MCF 10A (cell line): ENCODE measurements at regions of chr3 and their contacts with region 1.

Region 1: DNA sequence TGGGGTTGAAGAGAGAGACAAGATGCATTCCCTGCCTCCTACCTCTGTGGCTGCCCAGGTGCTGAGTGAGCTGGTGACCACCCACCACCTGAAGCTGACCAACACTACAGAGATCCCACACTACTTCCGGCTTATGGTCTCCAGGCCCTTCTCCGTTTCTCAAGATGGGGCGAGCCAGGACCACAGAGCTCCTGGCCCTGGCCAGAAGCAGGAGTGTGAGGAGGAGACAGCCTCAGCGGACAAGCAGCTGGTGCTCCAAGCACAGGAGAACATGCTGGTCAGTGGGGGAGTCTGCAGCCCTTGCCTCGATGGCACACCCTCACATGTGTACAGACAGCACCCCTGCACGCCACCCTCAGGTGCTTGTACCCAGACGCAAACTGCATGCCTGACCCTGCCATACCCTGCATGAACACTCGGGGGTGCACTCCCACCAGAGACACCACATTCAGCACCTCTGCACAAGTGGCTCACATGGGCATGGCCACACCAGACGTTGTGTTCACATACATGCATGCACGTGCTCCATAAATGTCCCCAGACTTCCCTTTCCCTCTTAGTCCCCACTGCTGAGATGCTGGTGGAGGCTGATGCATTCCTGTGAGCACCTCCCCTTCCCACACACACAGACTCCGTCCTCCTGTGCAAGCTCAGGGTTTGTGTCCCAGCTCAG is 19.0 kb downstream of the ACAA1 start:
- DNase-seq: peak; percentile 65
- H3K4me3 Mint-ChIP-seq: no peak overlapping the region
- H3K27ac Mint-ChIP-seq: no peak overlapping the region
- H3K4me1 Mint-ChIP-seq: no peaks in the 10 kb centered on the region
- H3K27me3 Mint-ChIP-seq: peaks cover 12% of the 10 kb centered on the region
- CTCF ChIP-seq: peak; percentile 70

Region 2: GRCh38 chr3:37814547-37814946 is 303.3 kb before region 1 on chr3:
- CTCF ChIA-PET with region 1: no interaction called
- POLR2A ChIA-PET with region 1: no interaction called
- intact Hi-C with region 1: no loop called
- DNase-seq: peak; percentile 3
- H3K4me3 Mint-ChIP-seq: no peak overlapping the region
- H3K27ac Mint-ChIP-seq: no peak overlapping the region
- H3K4me1 Mint-ChIP-seq: no peaks in the 10 kb centered on the region
- H3K27me3 Mint-ChIP-seq: no peaks in the 10 kb centered on the region
- CTCF ChIP-seq: peak; percentile 5

Region 3: GRCh38 chr3:38004415-38005076 is 113.3 kb before region 1 on chr3:
- CTCF ChIA-PET with region 1: interaction called, 46 read pairs
- POLR2A ChIA-PET with region 1: interaction called, 3 read pairs
- intact Hi-C with region 1: loop called (anchors 1 kb)
- DNase-seq: peak; percentile 81
- H3K4me3 Mint-ChIP-seq: no peak overlapping the region
- H3K27ac Mint-ChIP-seq: no peak overlapping the region
- H3K4me1 Mint-ChIP-seq: peaks cover 23% of the 10 kb centered on the region
- H3K27me3 Mint-ChIP-seq: no peaks in the 10 kb centered on the region
- CTCF ChIP-seq: peak; percentile 69

Region 4: DNA sequence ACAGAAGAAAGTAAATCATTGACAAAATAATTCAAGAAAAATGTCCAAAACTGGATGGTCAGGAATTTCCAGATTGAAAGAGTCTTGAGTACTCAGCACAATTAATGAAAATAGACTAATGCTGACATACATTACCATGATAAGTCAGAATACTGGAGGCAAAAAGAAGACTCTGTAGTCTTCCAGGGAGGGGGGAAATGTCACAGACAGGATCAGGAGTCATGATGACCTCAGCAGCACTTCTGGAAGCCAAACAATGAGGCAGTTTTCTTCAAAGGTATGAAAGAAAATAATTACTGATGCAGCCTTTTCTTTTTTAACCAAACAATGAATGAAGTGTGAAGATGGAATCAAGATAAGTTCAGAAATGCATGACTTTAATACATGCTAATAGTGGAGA is 117.6 kb after region 1 on chr3:
- CTCF ChIA-PET with region 1: interaction called, 10 read pairs
- POLR2A ChIA-PET with region 1: no interaction called
- intact Hi-C with region 1: no loop called
- DNase-seq: no peak
- H3K4me3 Mint-ChIP-seq: no peak overlapping the region
- H3K27ac Mint-ChIP-seq: no peak overlapping the region
- H3K4me1 Mint-ChIP-seq: no peaks in the 10 kb centered on the region
- H3K27me3 Mint-ChIP-seq: no peaks in the 10 kb centered on the region
- CTCF ChIP-seq: no peak

Region 5: GRCh38 chr3:38297947-38298711 is 180.2 kb after region 1 on chr3:
- CTCF ChIA-PET with region 1: interaction called, 21 read pairs
- POLR2A ChIA-PET with region 1: no interaction called
- intact Hi-C with region 1: loop called (anchors 1 kb)
- DNase-seq: peak; percentile 23
- H3K4me3 Mint-ChIP-seq: no peak overlapping the region
- H3K27ac Mint-ChIP-seq: no peak overlapping the region
- H3K4me1 Mint-ChIP-seq: no peaks in the 10 kb centered on the region
- H3K27me3 Mint-ChIP-seq: no peaks in the 10 kb centered on the region
- CTCF ChIP-seq: peak; percentile 40

Region 6: DNA sequence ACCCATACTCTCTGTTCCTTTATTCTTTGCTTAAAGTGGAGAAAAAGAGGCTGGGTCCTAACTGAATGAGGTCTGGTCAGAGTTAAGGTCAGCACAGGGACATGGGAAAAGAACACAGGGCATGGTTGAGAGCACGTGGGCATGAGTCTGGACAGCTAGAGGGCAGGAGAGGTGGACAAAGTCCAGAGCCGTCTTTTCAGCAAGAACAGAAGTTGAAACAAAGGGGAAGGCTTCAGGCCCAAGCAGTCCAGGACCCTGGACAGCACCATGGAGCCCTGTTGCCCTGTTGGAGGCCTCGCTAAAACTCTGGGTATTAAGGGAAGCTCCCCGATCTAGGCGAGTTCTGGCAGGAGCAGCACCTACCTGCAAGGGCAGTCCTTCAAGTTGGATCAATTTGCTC is 279.4 kb after region 1 on chr3:
- CTCF ChIA-PET with region 1: no interaction called
- POLR2A ChIA-PET with region 1: no interaction called
- intact Hi-C with region 1: no loop called
- DNase-seq: peak; percentile 45
- H3K4me3 Mint-ChIP-seq: no peak overlapping the region
- H3K27ac Mint-ChIP-seq: no peak overlapping the region
- H3K4me1 Mint-ChIP-seq: no peaks in the 10 kb centered on the region
- H3K27me3 Mint-ChIP-seq: no peaks in the 10 kb centered on the region
- CTCF ChIP-seq: no peak